KBM-7 (cell line): ENCODE measurements at regions of chr3 and their contacts with region 1.

Region 1: GRCh38 chr3:168165390-168166269 is 69.9 kb upstream of the GOLIM4 start:
- DNase-seq: peak; percentile 70

Region 2: GRCh38 chr3:167798443-167798842 is 367.2 kb before region 1 on chr3:
- in situ Hi-C with region 1: no loop called
- DNase-seq: no peak

Region 3: GRCh38 chr3:167941234-167941995 is 224.2 kb before region 1 on chr3:
- in situ Hi-C with region 1: loop called (anchors 25 kb)
- DNase-seq: peak; percentile 95

Region 4: GRCh38 chr3:168061332-168061996 is 104.2 kb before region 1 on chr3:
- in situ Hi-C with region 1: loop called (anchors 25 kb)
- DNase-seq: no peak

Region 5: GRCh38 chr3:168273917-168274316 is 108.3 kb after region 1 on chr3:
- in situ Hi-C with region 1: no loop called
- DNase-seq: no peak

Region 6: DNA sequence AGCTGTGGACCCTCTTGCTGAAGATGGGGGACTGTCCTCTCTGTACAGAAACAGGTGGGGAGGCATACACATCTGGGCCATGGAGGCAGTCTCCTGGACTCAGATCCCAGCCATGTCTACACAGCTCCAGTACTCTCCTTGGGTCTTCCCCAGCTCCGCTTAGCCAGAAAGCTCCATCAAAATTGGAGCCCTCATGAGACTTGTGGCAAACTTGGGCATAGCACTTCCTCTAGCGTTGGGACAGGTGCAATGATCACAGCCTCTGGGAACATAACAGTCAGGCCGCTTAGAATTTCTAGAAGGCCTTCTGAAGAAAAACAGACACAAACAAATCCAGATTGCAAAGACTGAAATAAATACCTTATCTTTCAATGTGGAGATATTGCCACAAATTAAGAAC is 564.4 kb after region 1 on chr3:
- in situ Hi-C with region 1: no loop called
- DNase-seq: no peak